ENCODE measurements at regions of chr1 and their contacts with region 1.

Region 1: GRCh38 chr1:5514519-5515183 is 477.6 kb downstream of the NPHP4 start:
- DNase-seq: peak; percentile 21
- ATAC-seq: peak; percentile 88
- H3K4me3 ChIP-seq: no peak overlapping the region
- H3K27ac ChIP-seq: no peak overlapping the region
- H3K4me1 ChIP-seq: no peaks in the 10 kb centered on the region
- H3K27me3 ChIP-seq: peaks cover 4 to 22% of the 10 kb centered on the region in 2 experiments; a peak in 4 of 5 replicates
- CTCF ChIP-seq: peak; percentile 82
- EP300 ChIP-seq: no peak
- POLR2A ChIP-seq: no peak
- RAD21 ChIP-seq: no peak

Region 2: GRCh38 chr1:5504354-5504720 is 10.3 kb before region 1 on chr1:
- CTCF ChIA-PET with region 1: no interaction called
- POLR2A ChIA-PET with region 1: no interaction called
- in situ Hi-C with region 1: no loop called
- intact Hi-C with region 1: no loop called
- DNase-seq: no peak
- ATAC-seq: no peak
- H3K4me3 ChIP-seq: no peak overlapping the region
- H3K27ac ChIP-seq: no peak overlapping the region
- H3K4me1 ChIP-seq: no peaks in the 10 kb centered on the region
- H3K27me3 ChIP-seq: peaks cover 3 to 46% of the 10 kb centered on the region in 2 experiments; a peak in 4 of 5 replicates
- CTCF ChIP-seq: no peak
- EP300 ChIP-seq: no peak
- POLR2A ChIP-seq: no peak
- RAD21 ChIP-seq: no peak

Region 3: DNA sequence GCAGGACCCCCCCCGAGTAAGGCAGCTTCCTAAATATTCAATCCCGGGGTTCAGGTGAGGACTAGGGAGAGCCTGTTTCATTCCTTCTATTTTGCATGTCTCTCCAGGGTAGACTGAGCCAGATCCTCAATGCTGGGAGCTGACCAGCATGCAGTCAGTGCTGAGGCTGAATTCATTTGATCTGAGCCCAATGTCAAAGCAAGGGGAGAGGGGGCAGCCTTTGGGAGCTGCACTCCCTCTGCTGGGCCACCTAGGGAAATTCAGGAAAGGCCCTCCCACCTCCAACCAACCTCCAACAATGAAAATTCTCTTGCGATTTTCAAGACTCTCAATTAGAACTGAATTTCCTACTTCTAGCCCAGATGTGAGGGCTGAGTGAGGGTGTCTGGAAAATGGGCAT is 106.3 kb after region 1 on chr1:
- CTCF ChIA-PET with region 1: interaction called, 5 read pairs
- POLR2A ChIA-PET with region 1: no interaction called
- in situ Hi-C with region 1: loop called (anchors 5 kb)
- intact Hi-C with region 1: no loop called
- DNase-seq: peak; percentile 26
- ATAC-seq: peak; percentile 82
- H3K4me3 ChIP-seq: no peak overlapping the region
- H3K27ac ChIP-seq: no peak overlapping the region
- H3K4me1 ChIP-seq: no peaks in the 10 kb centered on the region
- H3K27me3 ChIP-seq: peaks cover 5 to 29% of the 10 kb centered on the region in 2 experiments; a peak in 4 of 5 replicates
- CTCF ChIP-seq: peak; percentile 55
- EP300 ChIP-seq: no peak
- POLR2A ChIP-seq: no peak
- RAD21 ChIP-seq: peak; percentile 40; the same call in 1 of the 2 replicates

Region 4: DNA sequence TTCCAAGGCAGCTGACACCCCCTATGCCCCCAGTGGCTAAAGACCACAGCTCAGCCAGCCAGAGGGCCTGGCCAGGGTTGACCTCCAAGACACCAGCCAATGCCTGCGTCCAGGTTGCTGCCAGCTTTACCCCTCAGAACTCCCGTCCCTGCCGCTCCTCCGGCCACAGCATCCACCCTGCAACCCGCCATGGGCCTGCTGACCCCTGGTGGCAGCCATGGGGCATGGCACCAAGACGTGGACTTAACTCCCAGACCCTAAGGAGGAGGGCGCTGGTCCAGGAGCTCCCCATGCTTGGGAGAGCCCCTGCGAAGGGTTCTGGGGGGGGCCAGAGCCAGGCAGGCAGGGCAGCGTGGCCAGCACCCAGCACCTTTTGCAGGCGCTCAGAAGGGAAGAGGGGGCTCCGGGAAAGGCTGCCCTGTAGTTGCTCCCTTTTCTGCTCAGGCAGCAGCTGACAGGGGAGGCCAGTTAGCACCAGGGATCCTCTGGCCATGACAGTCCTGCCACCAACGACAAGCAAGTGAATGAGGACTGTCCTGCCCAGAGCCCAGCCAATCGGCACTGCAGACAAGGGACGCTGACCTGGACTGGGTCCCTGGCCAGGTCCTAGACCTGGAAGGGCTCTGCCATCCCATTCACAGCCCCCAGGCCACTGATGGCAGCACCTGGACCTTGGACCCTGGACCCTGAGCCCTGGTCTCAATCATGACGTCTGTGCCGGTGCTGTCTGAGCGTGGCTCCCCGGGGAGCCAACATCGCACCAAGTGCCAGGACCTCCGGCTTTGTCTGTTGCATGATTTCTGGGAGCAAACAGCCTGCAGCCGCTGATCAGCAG is 231.3 kb after region 1 on chr1:
- CTCF ChIA-PET with region 1: interaction called, 14 read pairs
- POLR2A ChIA-PET with region 1: no interaction called
- in situ Hi-C with region 1: loop called (anchors 5 kb)
- intact Hi-C with region 1: no loop called
- DNase-seq: peak; percentile 52
- ATAC-seq: peak; percentile 91
- H3K4me3 ChIP-seq: no peak overlapping the region
- H3K27ac ChIP-seq: no peak overlapping the region
- H3K4me1 ChIP-seq: peaks cover 8% of the 10 kb centered on the region; the same call in 1 of the 2 replicates
- H3K27me3 ChIP-seq: peaks cover 3 to 65% of the 10 kb centered on the region in 2 experiments; a peak in 4 of 5 replicates
- CTCF ChIP-seq: peak; percentile 97
- EP300 ChIP-seq: no peak
- POLR2A ChIP-seq: no peak
- RAD21 ChIP-seq: peak; percentile 71

Region 5: GRCh38 chr1:5915587-5916571 is 401.2 kb after region 1 on chr1:
- CTCF ChIA-PET with region 1: no interaction called
- POLR2A ChIA-PET with region 1: no interaction called
- in situ Hi-C with region 1: no loop called
- intact Hi-C with region 1: loop called (anchors 5 kb)
- DNase-seq: peak; percentile 30
- ATAC-seq: peak; percentile 81
- H3K4me3 ChIP-seq: no peak overlapping the region
- H3K27ac ChIP-seq: no peak overlapping the region
- H3K4me1 ChIP-seq: peaks cover 27% of the 10 kb centered on the region
- H3K27me3 ChIP-seq: no peaks in the 10 kb centered on the region
- CTCF ChIP-seq: peak; percentile 67
- EP300 ChIP-seq: no peak
- POLR2A ChIP-seq: no peak
- RAD21 ChIP-seq: no peak

Region 6: GRCh38 chr1:5975133-5975880 is 460.7 kb after region 1 on chr1:
- CTCF ChIA-PET with region 1: interaction called, 13 read pairs
- POLR2A ChIA-PET with region 1: no interaction called
- in situ Hi-C with region 1: loop called (anchors 5 kb)
- intact Hi-C with region 1: no loop called
- DNase-seq: peak; percentile 49
- ATAC-seq: peak; percentile 85
- H3K4me3 ChIP-seq: no peak overlapping the region
- H3K27ac ChIP-seq: no peak overlapping the region
- H3K4me1 ChIP-seq: no peaks in the 10 kb centered on the region
- H3K27me3 ChIP-seq: no peaks in the 10 kb centered on the region
- CTCF ChIP-seq: peak; percentile 90
- EP300 ChIP-seq: no peak
- POLR2A ChIP-seq: no peak
- RAD21 ChIP-seq: peak; percentile 93

Measured in HepG2 (cell line).